ENCODE measurements at regions of chr22 and their contacts with region 1.

Region 1: GRCh38 chr22:28882878-28883656 is at the start of gene ZNRF3:
- DNase-seq: peak; percentile 92 to 97 (median 94)
- H3K4me3 ChIP-seq: peak within 1 kb of the TSS in 3 of 4 donors; percentile 29 to 73 (median 46)
- H3K27ac ChIP-seq: peak within 1 kb of the TSS in 2 of 5 donors; percentile 74 to 85
- H3K4me1 ChIP-seq: peaks cover 20 to 24% of the 10 kb centered on the region in 2 donors
- H3K27me3 ChIP-seq: no peaks in the 10 kb centered on the region
- CTCF ChIP-seq: peak in 1 of 6 experiments; percentile 17
- POLR2A ChIP-seq: peak in 1 of 2 donors; percentile 76
- total RNA-seq, gene ZNRF3: 8.3 to 40.9 (median 22.8) TPM

Region 2: DNA sequence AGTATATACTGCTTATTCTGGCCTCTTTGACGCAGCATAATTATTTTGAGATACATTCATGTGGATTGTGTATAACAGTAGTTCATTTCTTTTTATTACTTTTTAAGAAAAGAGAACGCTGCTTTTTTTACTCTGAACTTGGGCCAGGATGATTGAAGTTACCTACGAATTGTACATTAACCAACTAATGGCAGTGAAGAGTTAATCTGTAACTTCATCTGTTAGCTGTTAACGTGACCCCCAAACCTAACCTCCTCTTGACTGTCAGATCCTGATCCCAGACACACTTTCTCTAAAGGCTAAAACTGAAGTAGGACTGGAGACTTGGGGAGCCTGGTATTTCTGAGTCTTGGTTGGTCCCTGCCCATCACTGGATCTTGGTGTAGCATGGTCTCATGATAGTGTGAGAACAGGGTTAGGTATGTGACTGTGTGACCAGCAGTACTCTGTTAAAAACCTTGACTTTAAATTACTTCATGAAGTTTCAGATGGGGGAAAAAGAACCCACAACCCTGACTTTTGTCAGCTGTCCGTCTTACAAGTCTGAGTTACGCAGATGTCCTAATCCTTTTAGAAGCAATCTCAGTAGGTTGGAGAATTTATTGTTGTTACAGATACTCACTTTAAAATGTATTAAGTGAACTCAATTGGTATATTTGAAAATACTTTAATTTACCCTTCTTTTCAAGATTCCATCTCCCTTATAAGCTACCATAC is 139.2 kb after region 1 on chr22:
- intact Hi-C with region 1: loop called in 1 of 2 experiments (anchors 10 kb)
- DNase-seq: no peak
- H3K4me3 ChIP-seq: no peak overlapping the region
- H3K27ac ChIP-seq: no peak overlapping the region
- H3K4me1 ChIP-seq: peaks cover 0 to 19% of the 10 kb centered on the region in 2 donors
- H3K27me3 ChIP-seq: no peaks in the 10 kb centered on the region
- CTCF ChIP-seq: no peak
- POLR2A ChIP-seq: no peak

Measured in adrenal gland (tissue), 19 donors.